Activated CD4-positive, alpha-beta T cell treated with anti-CD3 and anti-CD28 coated beads, Interleukin-2, amount 10 ng/mL, durations not matched to agents 24 days and 14 days (primary cell): ENCODE measurements at regions of chr12 and their contacts with region 1.

Region 1: GRCh38 chr12:32659908-32660440 is 19.1 kb upstream of the DNM1L start:
- DNase-seq: no peak
- H3K4me3 Mint-ChIP-seq: no peak overlapping the region
- H3K27ac Mint-ChIP-seq: no peak overlapping the region
- H3K4me1 Mint-ChIP-seq: peaks cover 11% of the 10 kb centered on the region
- H3K27me3 Mint-ChIP-seq: no peaks in the 10 kb centered on the region

Region 2: GRCh38 chr12:32679091-32679919 is 19.3 kb after region 1 on chr12 and contains the start of gene DNM1L:
- intact Hi-C with region 1: loop called (anchors 2 kb)
- DNase-seq: peak; percentile 98
- H3K4me3 Mint-ChIP-seq: peak within 1 kb of the TSS; percentile 88
- H3K27ac Mint-ChIP-seq: peak within 1 kb of the TSS; percentile 93
- H3K4me1 Mint-ChIP-seq: peaks cover 21% of the 10 kb centered on the region
- H3K27me3 Mint-ChIP-seq: no peaks in the 10 kb centered on the region
- total RNA-seq, gene DNM1L: 83.3 and 90.7 TPM in 2 replicates